ENCODE measurements at regions of chr7 and their contacts with region 1.

Region 1: GRCh38 chr7:24965831-24966709 is 13.9 kb downstream of the OSBPL3 start:
- DNase-seq: peak; percentile 98
- ATAC-seq: peak; percentile 78
- H3K4me3 ChIP-seq: peak overlapping the region; percentile 44; the same call in 1 of the 2 replicates
- H3K27ac ChIP-seq: peak overlapping the region; percentile 82
- H3K4me1 ChIP-seq: peaks cover 65% of the 10 kb centered on the region
- H3K27me3 ChIP-seq: no peaks in the 10 kb centered on the region
- CTCF ChIP-seq: no peak
- EP300 ChIP-seq: peak; percentile 93 to 97
- POLR2A ChIP-seq: no peak; the same call in 1 of the 2 replicates
- RAD21 ChIP-seq: 0 out of 2 replicates have a peak, but pooled peaks have one; percentile 15

Region 2: DNA sequence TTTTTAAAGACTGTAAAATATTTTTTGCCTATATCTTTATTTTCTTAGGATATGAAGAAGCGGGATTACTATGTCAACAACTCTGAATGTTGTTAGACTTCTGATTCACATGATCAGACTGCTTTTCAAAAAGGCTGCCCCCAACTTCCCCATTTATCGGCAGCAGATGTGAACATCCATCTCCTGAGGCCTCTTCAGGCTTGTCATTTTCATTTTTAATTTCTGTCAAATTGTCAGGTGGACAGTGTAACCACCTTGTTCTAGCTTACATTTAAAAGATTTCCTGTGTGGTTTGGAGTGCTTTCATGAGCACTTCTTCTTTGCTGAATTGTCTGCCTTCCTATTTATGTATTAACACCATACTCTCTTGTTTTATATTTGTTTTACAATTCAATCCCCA is 130.0 kb before region 1 on chr7:
- CTCF ChIA-PET with region 1: interaction called, 4 read pairs
- POLR2A ChIA-PET with region 1: interaction called, 5 read pairs
- RAD21 ChIA-PET with region 1: interaction called, 10 read pairs
- SMC1A ChIA-PET with region 1: interaction called, 4 read pairs
- in situ Hi-C with region 1: no loop called
- intact Hi-C with region 1: no loop called
- DNase-seq: peak; percentile 76
- ATAC-seq: peak; percentile 85
- H3K4me3 ChIP-seq: 0 out of 2 replicates have a peak overlapping the region, but pooled peaks have one; percentile 9
- H3K27ac ChIP-seq: peak overlapping the region; percentile 29; the same call in 1 of the 2 replicates
- H3K4me1 ChIP-seq: peaks cover 48% of the 10 kb centered on the region
- H3K27me3 ChIP-seq: no peaks in the 10 kb centered on the region
- CTCF ChIP-seq: no peak
- EP300 ChIP-seq: peak; percentile 60 to 70; a peak in 3 of 4 replicates
- POLR2A ChIP-seq: no peak
- RAD21 ChIP-seq: no peak

Region 3: GRCh38 chr7:24877790-24878311 is 88.2 kb before region 1 on chr7:
- CTCF ChIA-PET with region 1: interaction called, 4 read pairs
- POLR2A ChIA-PET with region 1: interaction called, 3 read pairs
- RAD21 ChIA-PET with region 1: interaction called, 4 read pairs
- SMC1A ChIA-PET with region 1: interaction called, 12 read pairs
- in situ Hi-C with region 1: no loop called
- intact Hi-C with region 1: no loop called
- DNase-seq: peak; percentile 62
- ATAC-seq: peak; percentile 88
- H3K4me3 ChIP-seq: no peak overlapping the region; the same call in 1 of the 2 replicates
- H3K27ac ChIP-seq: peak overlapping the region; percentile 5; the same call in 1 of the 2 replicates
- H3K4me1 ChIP-seq: peaks cover 16% of the 10 kb centered on the region
- H3K27me3 ChIP-seq: no peaks in the 10 kb centered on the region
- CTCF ChIP-seq: no peak
- EP300 ChIP-seq: no peak
- POLR2A ChIP-seq: no peak
- RAD21 ChIP-seq: no peak

Region 4: GRCh38 chr7:24907311-24907886 is 58.7 kb before region 1 on chr7:
- CTCF ChIA-PET with region 1: interaction called, 8 read pairs
- POLR2A ChIA-PET with region 1: interaction called, 10 read pairs
- RAD21 ChIA-PET with region 1: interaction called, 93 read pairs
- SMC1A ChIA-PET with region 1: interaction called, 66 read pairs
- in situ Hi-C with region 1: loop called (anchors 5 kb)
- intact Hi-C with region 1: no loop called
- DNase-seq: peak; percentile 44
- ATAC-seq: peak; percentile 74
- H3K4me3 ChIP-seq: peak overlapping the region; percentile 4; the same call in 1 of the 2 replicates
- H3K27ac ChIP-seq: peak overlapping the region; percentile 80
- H3K4me1 ChIP-seq: peaks cover 51% of the 10 kb centered on the region
- H3K27me3 ChIP-seq: no peaks in the 10 kb centered on the region
- CTCF ChIP-seq: no peak
- EP300 ChIP-seq: no peak
- POLR2A ChIP-seq: no peak
- RAD21 ChIP-seq: 0 out of 2 replicates have a peak, but pooled peaks have one; percentile 7

Region 5: GRCh38 chr7:24948739-24949138 is 17.3 kb before region 1 on chr7:
- CTCF ChIA-PET with region 1: interaction called, 7 read pairs
- POLR2A ChIA-PET with region 1: interaction called, 13 read pairs
- RAD21 ChIA-PET with region 1: interaction called, 17 read pairs
- SMC1A ChIA-PET with region 1: interaction called, 42 read pairs
- in situ Hi-C with region 1: no loop called
- intact Hi-C with region 1: no loop called
- DNase-seq: no peak
- ATAC-seq: peak; percentile 47
- H3K4me3 ChIP-seq: no peak overlapping the region
- H3K27ac ChIP-seq: peak overlapping the region; percentile 7; the same call in 1 of the 2 replicates
- H3K4me1 ChIP-seq: peaks cover 12% of the 10 kb centered on the region; the same call in 1 of the 2 replicates
- H3K27me3 ChIP-seq: no peaks in the 10 kb centered on the region
- CTCF ChIP-seq: no peak
- EP300 ChIP-seq: no peak
- POLR2A ChIP-seq: no peak
- RAD21 ChIP-seq: no peak

Region 6: GRCh38 chr7:25031432-25031831 is 65.4 kb after region 1 on chr7:
- CTCF ChIA-PET with region 1: no interaction called
- POLR2A ChIA-PET with region 1: no interaction called
- RAD21 ChIA-PET with region 1: no interaction called
- SMC1A ChIA-PET with region 1: no interaction called
- in situ Hi-C with region 1: no loop called
- intact Hi-C with region 1: no loop called
- DNase-seq: no peak
- ATAC-seq: peak; percentile 74
- H3K4me3 ChIP-seq: no peak overlapping the region
- H3K27ac ChIP-seq: no peak overlapping the region
- H3K4me1 ChIP-seq: peaks cover 19% of the 10 kb centered on the region
- H3K27me3 ChIP-seq: no peaks in the 10 kb centered on the region
- CTCF ChIP-seq: no peak; a peak in 1 of 6 replicates
- EP300 ChIP-seq: no peak
- POLR2A ChIP-seq: no peak
- RAD21 ChIP-seq: no peak

Measured in GM12878 (cell line).